ENCODE measurements at regions of chr16 and their contacts with region 1.

Region 1: DNA sequence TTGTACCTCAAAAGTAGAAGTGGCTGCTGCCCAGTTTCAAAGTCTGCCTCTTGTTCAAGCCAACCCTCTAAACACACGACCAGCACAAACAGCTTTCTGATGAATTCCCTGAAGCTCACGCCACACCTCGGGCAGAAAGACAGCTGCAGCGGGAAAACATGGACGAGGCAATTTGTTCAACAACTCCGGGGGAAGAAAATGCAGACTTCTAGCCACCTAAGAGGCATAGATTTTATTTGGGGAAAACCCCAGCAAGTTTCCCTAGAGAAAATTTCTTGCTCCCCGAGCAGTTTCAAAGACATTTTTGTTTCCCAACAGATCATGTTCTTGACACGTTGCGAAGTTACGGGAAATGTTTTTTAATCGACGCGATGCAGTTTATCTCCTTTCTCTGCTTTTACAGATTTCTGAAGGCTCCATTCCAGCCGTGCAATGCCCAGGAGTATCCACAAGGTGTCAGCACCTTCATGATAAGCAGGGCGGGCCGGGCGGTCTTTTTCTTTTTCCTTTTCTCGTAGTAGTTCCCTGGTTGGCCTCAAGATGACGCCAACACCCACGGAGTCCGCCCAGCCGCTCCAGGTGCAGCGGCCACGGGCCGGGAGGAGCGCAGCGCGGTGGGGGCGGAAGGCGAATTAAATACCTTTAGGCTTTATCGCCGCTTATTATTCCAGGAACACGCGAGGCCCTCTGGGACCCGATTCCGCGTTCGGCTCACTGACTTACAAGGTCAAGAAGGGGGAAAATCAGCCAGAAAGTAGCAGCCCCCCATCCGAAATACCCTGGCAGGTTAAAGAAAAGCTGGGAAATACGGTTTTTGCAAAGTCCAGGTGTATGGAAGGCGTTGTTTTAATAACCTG is 2.9 kb upstream of the FOXC2 start:
- DNase-seq: no peak
- H3K4me3 ChIP-seq: peak overlapping the region; percentile 57
- CTCF ChIP-seq: peak; percentile 86

Region 2: GRCh38 chr16:86595983-86596605 is 32.4 kb after region 1 on chr16:
- CTCF ChIA-PET with region 1: no interaction called
- POLR2A ChIA-PET with region 1: no interaction called
- DNase-seq: no peak
- H3K4me3 ChIP-seq: no peak overlapping the region
- CTCF ChIP-seq: no peak

Region 3: GRCh38 chr16:86834451-86835035 is 270.8 kb after region 1 on chr16:
- CTCF ChIA-PET with region 1: interaction called, 11 read pairs
- POLR2A ChIA-PET with region 1: no interaction called
- DNase-seq: peak; percentile 71
- H3K4me3 ChIP-seq: no peak overlapping the region
- CTCF ChIP-seq: peak; percentile 54

Region 4: GRCh38 chr16:87043231-87044031 is 479.7 kb after region 1 on chr16:
- CTCF ChIA-PET with region 1: interaction called, 18 read pairs
- POLR2A ChIA-PET with region 1: no interaction called
- DNase-seq: no peak
- H3K4me3 ChIP-seq: no peak overlapping the region
- CTCF ChIP-seq: no peak

Region 5: GRCh38 chr16:87076950-87077749 is 513.4 kb after region 1 on chr16:
- CTCF ChIA-PET with region 1: interaction called, 23 read pairs
- POLR2A ChIA-PET with region 1: no interaction called
- DNase-seq: no peak
- H3K4me3 ChIP-seq: no peak overlapping the region
- CTCF ChIP-seq: peak; percentile 75

Region 6: DNA sequence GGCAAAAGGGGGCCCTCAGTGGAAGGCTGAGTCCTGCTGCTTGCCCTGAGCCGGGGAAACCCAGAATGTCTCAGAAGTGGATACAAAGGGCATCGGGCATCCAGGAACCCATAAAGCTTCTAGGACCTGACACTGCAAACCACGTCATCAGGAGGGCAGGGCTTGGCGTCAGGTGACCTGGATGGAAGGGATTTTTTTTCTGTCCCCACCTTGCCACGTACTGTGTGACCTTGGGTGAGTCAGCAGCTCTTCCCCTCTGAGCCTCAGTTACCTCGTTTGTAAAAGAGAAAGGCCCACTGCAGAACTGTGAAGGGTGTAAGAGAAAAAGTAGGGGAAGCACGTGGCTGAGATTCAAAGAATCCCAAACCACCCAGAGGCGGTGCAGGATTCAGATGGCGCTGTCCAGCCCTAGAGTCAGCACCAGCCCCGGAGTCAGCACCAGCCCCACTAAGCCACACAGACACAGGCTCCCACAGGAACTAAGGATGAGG is 699.8 kb after region 1 on chr16:
- CTCF ChIA-PET with region 1: interaction called, 11 read pairs
- POLR2A ChIA-PET with region 1: no interaction called
- DNase-seq: no peak
- H3K4me3 ChIP-seq: no peak overlapping the region
- CTCF ChIP-seq: no peak

Measured in AG04449 (cell line).